Mucosa of descending colon (tissue), 3 donors: ENCODE measurements at regions of chr4 and their contacts with region 1.

Region 1: DNA sequence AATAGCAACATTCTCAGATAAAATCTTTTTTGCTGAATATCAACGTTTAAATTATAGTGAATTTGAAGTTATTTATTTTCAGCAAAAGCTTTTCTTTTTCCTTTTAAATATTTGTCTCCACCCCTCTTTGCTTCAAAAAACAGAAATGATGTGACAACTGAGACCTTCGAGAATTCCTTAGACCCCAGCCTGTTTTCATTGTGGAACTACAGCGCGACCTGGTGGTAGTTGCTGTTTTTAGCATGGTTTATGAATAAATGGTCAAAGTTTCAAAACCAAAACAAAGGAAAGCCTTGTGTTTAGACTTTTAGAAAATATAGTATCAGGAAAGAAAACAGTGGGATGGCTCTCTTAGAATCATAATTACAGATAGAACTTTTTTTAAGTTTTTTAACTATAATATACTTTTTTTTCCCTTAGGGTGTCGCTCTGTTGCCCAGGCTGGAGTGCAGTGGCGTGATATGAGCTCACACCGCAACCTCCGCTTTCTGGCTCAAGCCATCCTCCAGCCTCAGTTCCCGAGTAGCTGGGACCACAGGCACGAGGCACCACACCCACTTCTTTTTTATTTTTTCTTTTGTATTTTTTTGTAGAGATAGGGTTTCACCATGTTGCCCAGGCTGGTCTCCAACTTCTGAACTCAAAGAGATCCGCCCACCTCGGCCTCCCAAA is 26.8 kb upstream of the TMEM184C start:
- DNase-seq: peak in 2 of 3 donors; percentile 29 to 70
- ATAC-seq: no peak
- H3K4me3 ChIP-seq: no peak overlapping the region
- H3K4me1 ChIP-seq: no peaks in the 10 kb centered on the region
- CTCF ChIP-seq: peak; percentile 37

Region 2: DNA sequence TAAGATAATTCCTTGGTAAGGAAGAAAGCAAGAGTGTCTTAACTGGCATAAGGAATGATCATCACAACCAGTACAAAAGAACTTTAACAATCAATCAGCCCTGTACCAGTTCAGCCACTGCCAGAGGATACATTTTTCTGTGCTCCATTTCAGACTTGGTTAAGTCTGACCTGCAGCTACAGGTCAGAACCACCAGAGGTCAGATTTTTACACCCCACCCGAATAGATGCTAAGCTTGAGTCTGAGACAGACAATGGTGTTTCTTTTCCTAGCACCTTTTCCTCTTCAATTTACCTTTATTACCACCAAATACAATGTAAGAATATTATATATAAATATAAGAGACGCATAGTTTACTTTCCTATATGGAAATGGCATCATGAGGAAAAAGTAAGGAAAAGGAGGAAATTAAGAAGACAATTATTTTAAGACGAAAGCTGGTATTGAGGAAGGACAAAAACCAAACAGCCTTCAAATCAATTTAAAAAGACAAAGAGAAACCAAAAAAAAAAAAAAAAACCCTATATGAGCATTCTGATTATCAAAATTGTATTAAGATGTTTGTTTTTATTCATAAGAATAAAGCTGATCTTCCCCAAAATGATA is 429.4 kb before region 1 on chr4:
- intact Hi-C with region 1: loop called in 1 of 2 experiments (anchors 10 kb)
- DNase-seq: peak in 1 of 3 donors; percentile 32
- ATAC-seq: peak; percentile 80
- H3K4me3 ChIP-seq: no peak overlapping the region
- H3K4me1 ChIP-seq: no peaks in the 10 kb centered on the region
- CTCF ChIP-seq: peak; percentile 68

Region 3: DNA sequence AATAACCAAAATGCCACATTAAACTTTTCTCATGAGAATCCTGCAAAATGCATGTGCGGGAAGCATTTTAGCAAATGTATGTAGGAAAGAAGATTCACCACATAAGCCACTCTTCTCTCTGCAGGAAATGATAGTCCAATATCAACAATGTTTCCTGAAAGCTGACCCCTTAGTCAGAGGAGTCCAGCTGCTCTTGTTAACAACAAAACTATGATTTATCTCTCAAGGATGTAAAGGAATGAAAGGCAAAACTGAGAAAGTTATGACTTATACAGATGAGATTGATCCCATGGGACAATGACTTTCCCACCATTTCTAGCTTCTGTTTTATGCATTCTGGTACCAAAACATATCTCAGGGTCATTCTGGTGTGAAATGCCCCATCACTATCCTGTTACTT is 234.5 kb before region 1 on chr4:
- intact Hi-C with region 1: no loop called
- DNase-seq: no peak
- ATAC-seq: no peak
- H3K4me3 ChIP-seq: no peak overlapping the region
- H3K4me1 ChIP-seq: peaks cover 8% of the 10 kb centered on the region
- CTCF ChIP-seq: no peak